Endothelial cell of umbilical vein (primary cell): ENCODE measurements at regions of chr4 and their contacts with region 1.

Region 1: GRCh38 chr4:73662709-73663546 is 42.7 kb upstream of the RASSF6 start:
- DNase-seq: peak; percentile 76
- H3K4me3 ChIP-seq: no peak overlapping the region
- H3K27ac ChIP-seq: peak overlapping the region; percentile 94
- H3K4me1 ChIP-seq: peaks cover 28% of the 10 kb centered on the region
- H3K27me3 ChIP-seq: no peaks in the 10 kb centered on the region
- CTCF ChIP-seq: peak; percentile 25 to 44
- POLR2A ChIP-seq: no peak

Region 2: GRCh38 chr4:73704314-73705055 is 41.6 kb after region 1 on chr4:
- CTCF ChIA-PET with region 1: interaction called, 14 read pairs
- POLR2A ChIA-PET with region 1: no interaction called
- dilution Hi-C with region 1: no loop called
- intact Hi-C with region 1: loop called (anchors 1 kb)
- DNase-seq: peak; percentile 99
- H3K4me3 ChIP-seq: no peak overlapping the region
- H3K27ac ChIP-seq: peak overlapping the region; percentile 70
- H3K4me1 ChIP-seq: peaks cover 61% of the 10 kb centered on the region
- H3K27me3 ChIP-seq: no peaks in the 10 kb centered on the region
- CTCF ChIP-seq: no peak
- POLR2A ChIP-seq: no peak

Region 3: DNA sequence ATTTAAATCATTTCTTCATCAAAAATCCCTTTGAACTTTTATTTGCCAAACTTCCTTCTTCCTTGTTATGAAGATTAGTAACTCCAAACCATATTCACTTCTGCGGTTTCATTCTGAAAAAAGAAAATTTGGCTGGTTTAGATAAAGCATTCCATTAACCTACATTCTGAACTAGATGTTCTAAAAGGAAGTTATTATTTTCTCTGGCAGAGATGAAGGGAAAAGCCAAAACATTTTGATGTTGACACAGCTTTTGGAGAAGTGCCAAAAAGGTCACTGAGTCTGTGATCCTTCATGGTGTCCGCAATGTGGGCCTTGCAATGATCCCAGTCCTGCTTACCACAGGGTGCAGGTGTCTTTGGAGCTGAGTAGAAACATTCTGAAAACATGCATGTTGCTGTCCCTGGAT is 113.4 kb after region 1 on chr4:
- CTCF ChIA-PET with region 1: no interaction called
- POLR2A ChIA-PET with region 1: no interaction called
- dilution Hi-C with region 1: no loop called
- intact Hi-C with region 1: loop called (anchors 1 kb)
- DNase-seq: peak; percentile 97
- H3K4me3 ChIP-seq: no peak overlapping the region
- H3K27ac ChIP-seq: peak overlapping the region; percentile 62
- H3K4me1 ChIP-seq: peaks cover 33% of the 10 kb centered on the region
- H3K27me3 ChIP-seq: no peaks in the 10 kb centered on the region
- CTCF ChIP-seq: no peak
- POLR2A ChIP-seq: peak; percentile 49

Region 4: DNA sequence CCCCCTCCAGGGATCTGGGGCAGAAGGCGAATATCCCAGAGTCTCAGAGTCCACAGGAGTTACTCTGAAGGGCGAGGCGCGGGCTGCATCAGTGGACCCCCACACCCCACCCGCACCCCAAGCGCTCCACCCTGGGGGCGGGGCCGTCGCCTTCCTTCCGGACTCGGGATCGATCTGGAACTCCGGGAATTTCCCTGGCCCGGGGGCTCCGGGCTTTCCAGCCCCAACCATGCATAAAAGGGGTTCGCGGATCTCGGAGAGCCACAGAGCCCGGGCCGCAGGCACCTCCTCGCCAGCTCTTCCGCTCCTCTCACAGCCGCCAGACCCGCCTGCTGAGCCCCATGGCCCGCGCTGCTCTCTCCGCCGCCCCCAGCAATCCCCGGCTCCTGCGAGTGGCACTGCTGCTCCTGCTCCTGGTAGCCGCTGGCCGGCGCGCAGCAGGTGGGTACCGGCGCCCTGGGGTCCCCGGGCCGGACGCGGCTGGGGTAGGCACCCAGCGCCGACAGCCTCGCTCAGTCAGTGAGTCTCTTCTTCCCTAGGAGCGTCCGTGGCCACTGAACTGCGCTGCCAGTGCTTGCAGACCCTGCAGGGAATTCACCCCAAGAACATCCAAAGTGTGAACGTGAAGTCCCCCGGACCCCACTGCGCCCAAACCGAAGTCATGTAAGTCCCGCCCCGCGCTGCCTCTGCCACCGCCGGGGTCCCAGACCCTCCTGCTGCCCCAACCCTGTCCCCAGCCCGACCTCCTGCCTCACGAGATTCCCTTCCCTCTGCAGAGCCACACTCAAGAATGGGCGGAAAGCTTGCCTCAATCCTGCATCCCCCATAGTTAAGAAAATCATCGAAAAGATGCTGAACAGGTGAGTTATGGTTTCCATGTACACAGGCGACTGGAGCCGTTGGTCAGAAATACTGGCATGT is 206.5 kb after region 1 on chr4 and contains the start of gene CXCL1:
- CTCF ChIA-PET with region 1: interaction called, 17 read pairs
- POLR2A ChIA-PET with region 1: no interaction called
- dilution Hi-C with region 1: no loop called
- intact Hi-C with region 1: loop called (anchors 1 kb)
- DNase-seq: peak; percentile 52
- H3K4me3 ChIP-seq: peak within 1 kb of the TSS; percentile 49 to 81 (median 67)
- H3K27ac ChIP-seq: peak within 1 kb of the TSS; percentile 55
- H3K4me1 ChIP-seq: peaks cover 35% of the 10 kb centered on the region
- H3K27me3 ChIP-seq: no peaks in the 10 kb centered on the region
- CTCF ChIP-seq: no peak
- POLR2A ChIP-seq: peak; percentile 68
- total RNA-seq, gene CXCL1: 9.0 and 20.0 TPM in 2 replicates

Region 5: GRCh38 chr4:74098450-74098994 is 435.6 kb after region 1 on chr4:
- CTCF ChIA-PET with region 1: interaction called, 35 read pairs
- POLR2A ChIA-PET with region 1: no interaction called
- dilution Hi-C with region 1: no loop called
- intact Hi-C with region 1: loop called (anchors 1 kb)
- DNase-seq: peak; percentile 38
- H3K4me3 ChIP-seq: peak overlapping the region; percentile 46 to 85 (median 69)
- H3K27ac ChIP-seq: peak overlapping the region; percentile 83
- H3K4me1 ChIP-seq: peaks cover 32% of the 10 kb centered on the region
- H3K27me3 ChIP-seq: no peaks in the 10 kb centered on the region
- CTCF ChIP-seq: no peak
- POLR2A ChIP-seq: no peak

Region 6: GRCh38 chr4:74632634-74633033 is 969.7 kb after region 1 on chr4:
- CTCF ChIA-PET with region 1: no interaction called
- POLR2A ChIA-PET with region 1: no interaction called
- dilution Hi-C with region 1: no loop called
- intact Hi-C with region 1: loop called (anchors 2 kb)
- DNase-seq: peak; percentile 99
- H3K4me3 ChIP-seq: no peak overlapping the region
- H3K27ac ChIP-seq: peak overlapping the region; percentile 75
- H3K4me1 ChIP-seq: peaks cover 45% of the 10 kb centered on the region
- H3K27me3 ChIP-seq: no peaks in the 10 kb centered on the region
- CTCF ChIP-seq: no peak
- POLR2A ChIP-seq: peak; percentile 76